ENCODE measurements at regions of chr2 and their contacts with region 1.

Region 1: GRCh38 chr2:20326163-20326780 is 24.4 kb downstream of the PUM2 start:
- DNase-seq: no peak
- H3K4me3 ChIP-seq: no peak overlapping the region
- H3K27ac ChIP-seq: no peak overlapping the region
- H3K4me1 ChIP-seq: peaks cover 0 to 4% (median 1%) of the 10 kb centered on the region in 4 experiments; a peak in 2 of 7 replicates
- H3K27me3 ChIP-seq: no peaks in the 10 kb centered on the region
- CTCF ChIP-seq: peak; percentile 49 to 85 (median 65)
- EP300 ChIP-seq: no peak
- POLR2A ChIP-seq: no peak
- RAD21 ChIP-seq: peak; percentile 66 to 72

Region 2: DNA sequence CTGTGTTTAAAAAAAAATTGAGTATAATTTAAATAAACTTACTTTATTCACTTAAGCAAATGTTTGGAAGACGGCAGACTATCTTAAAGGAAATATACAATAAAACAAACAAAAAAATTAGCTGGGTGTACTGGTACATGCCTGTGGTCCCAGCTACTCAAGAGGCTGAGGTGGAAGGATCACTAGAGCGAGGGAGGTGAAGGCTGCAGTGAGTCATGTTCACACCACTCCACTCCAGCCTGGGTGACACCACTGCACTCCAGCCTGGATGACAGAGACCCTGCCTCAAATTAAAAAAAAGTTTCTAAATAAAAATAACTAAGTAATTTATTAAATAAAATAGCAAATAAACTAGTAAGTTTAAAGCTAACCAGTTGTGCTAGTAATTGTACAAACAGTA is 16.9 kb after region 1 on chr2:
- CTCF ChIA-PET with region 1: interaction called, 14 read pairs
- POLR2A ChIA-PET with region 1: interaction called, 10 read pairs
- DNase-seq: no peak
- H3K4me3 ChIP-seq: no peak overlapping the region
- H3K27ac ChIP-seq: no peak overlapping the region
- H3K4me1 ChIP-seq: peaks cover 2 to 5% (median 4%) of the 10 kb centered on the region in 4 experiments; a peak in 5 of 7 replicates
- H3K27me3 ChIP-seq: no peaks in the 10 kb centered on the region
- CTCF ChIP-seq: no peak
- EP300 ChIP-seq: no peak
- POLR2A ChIP-seq: no peak
- RAD21 ChIP-seq: no peak